Right ventricle myocardium superior (tissue), 1 donor: ENCODE measurements at regions of chr22 and their contacts with region 1.

Region 1: GRCh38 chr22:40950962-40951794 is at the start of gene RBX1:
- DNase-seq: peak; percentile 98
- ATAC-seq: peak; percentile 96
- total RNA-seq, gene RBX1: 65.7 TPM

Region 2: GRCh38 chr22:40844951-40845350 is 106.2 kb before region 1 on chr22:
- intact Hi-C with region 1: no loop called
- DNase-seq: no peak
- ATAC-seq: no peak

Region 3: DNA sequence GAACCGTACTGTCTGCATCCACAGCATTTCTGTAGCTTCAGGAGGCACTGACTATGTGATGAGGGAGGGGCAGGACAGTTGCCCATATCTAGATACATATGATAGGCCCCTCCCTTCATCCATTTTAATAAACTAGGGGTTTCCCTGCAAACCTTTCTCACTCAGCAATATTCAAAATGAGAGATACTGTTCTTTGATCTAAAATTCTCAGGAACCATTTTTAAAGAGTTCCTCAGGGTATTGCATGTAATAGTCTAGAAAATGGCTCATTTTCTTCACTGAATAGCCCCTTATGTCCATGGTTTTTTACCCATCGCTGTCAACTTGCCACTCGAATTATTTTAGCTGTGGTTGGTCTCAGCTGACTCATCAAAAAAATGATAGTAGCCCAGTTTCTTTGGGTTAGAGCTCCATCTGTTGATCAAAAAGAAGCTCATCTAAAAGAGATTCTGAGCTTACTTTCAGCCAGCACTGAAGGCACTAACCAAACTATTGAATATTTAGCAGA is 52.3 kb before region 1 on chr22:
- intact Hi-C with region 1: no loop called
- DNase-seq: no peak
- ATAC-seq: no peak

Region 4: DNA sequence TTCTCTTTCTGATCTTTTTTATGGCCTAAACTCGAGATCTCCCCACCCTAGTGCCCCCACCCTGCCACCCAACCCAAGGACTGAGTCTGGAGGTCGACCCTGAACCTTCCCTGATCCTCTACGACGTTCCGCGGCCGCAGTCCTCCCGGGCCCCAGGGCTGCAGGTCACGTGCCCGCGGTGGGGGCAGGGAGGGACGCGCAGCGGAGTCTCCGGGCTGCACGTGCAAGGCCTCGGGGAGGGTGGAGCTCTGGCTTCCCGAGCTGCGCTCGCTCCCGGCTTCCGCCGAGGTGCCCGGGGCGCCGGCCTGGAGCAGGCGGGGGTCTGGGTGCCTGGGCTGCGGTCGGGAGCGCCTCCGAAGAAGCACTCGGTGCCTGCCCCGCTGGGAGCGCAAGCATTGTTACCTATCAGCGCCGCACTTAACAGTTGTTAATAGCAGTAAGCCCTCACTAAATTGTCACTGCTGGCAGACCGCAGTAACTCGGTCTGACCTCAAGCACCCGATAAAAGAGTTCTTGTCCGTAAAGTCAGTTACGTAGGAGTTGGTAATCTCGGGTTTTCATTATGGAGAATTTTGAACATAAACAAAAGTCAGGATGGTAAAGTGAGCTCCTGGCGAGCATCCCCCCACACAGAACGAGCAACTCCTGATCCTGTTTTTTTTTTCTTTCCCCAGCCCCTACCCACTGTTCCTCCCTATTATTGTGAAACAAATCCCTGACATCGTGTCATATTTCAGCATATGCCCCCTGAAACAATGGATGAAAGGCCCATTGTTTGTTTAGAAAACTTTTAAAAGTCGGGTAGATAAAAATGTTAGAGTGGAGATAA is 71.5 kb after region 1 on chr22:
- intact Hi-C with region 1: loop called (anchors 5 kb)
- DNase-seq: peak; percentile 96
- ATAC-seq: peak; percentile 95

Region 5: DNA sequence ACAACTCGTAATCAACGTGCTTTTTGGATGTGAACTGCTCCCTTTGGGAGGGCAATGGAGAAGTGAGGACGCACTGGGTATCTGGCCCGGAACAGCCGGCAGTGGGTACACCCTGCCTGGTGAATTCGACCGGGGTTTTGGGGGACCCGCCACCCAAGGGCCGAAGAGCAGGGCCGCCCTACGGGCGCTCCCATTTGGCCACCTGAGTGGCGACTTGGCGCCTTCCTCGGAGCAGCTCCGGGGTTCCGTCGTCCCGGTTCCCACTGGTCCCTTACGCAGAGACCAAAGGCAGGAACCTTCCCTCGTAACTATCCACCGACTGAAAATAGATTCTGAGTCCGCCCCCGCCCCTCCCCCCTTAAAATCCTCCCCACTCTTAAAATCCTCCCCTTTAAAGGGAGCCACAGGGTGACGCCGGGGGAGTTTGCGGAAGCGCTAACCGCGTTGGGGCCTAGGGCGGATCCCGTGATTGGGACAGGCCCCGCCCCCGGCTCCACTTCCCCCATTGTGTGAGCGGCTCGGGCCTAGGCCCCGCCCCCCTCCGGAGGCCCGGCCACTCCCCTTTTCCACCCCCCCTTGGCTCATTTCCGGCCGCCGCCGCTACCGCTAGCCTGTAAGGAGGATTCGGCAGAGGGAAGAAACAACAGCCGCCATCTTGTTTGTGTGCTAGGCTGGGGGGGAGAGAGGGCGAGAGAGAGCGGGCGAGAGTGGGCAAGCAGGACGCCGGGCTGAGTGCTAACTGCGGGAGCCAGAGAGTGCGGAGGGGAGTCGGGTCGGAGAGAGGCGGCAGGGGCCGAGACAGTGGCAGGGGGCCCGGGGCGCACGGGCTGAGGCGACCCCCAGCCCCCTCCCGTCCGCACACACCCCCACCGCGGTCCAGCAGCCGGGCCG is 140.2 kb after region 1 on chr22:
- intact Hi-C with region 1: loop called (anchors 2 kb)
- DNase-seq: peak; percentile 100
- ATAC-seq: peak; percentile 96